ENCODE measurements at regions of chr1 and their contacts with region 1.

Region 1: DNA sequence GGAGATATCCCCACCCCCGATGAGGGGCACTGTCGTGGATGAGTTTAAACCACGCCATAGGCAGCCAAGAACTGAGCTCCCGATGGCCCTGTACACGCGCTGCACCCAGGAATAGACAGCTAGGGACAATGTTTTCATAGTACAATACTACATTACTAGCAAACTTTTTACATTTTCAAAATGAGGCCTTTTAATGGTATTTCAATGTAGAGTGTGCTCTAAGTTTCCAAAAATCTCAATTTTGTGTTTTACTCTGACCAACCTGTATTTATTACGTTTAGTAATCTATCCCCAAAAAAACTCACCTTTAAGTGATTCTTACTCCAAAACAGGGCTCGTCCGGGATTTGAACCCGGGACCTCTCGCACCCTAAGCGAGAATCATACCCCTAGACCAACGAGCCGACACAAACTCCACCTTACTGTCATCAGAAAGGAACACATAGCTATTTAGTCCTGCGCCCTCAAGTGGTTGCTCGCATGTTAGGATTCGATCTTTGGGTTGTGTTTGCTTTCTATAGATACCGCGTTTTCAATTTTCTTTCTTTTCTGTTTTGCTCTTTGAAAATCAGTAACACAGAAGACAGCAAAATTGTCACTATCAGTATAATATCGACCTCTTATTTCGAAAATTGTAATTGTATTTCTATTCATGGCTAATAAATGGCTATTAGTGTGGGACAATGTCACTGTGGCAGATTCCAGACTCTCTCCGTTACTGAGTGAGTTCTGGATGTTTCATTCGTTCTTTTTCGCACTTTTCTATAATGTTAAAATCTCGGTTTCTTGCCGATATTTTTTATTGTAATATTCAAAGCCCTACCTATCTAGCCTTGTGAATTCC is 6.4 kb upstream of the MPZL1 start:
- DNase-seq: peak; percentile 87 to 91 (median 88)
- H3K4me3 ChIP-seq: peak overlapping the region; percentile 80 to 87
- H3K4me3 Mint-ChIP-seq: peak overlapping the region; percentile 84 to 98 (median 92)
- H3K27ac ChIP-seq: peak overlapping the region; percentile 39
- H3K27ac Mint-ChIP-seq: peak overlapping the region; percentile 90 to 99 (median 94)
- H3K4me1 ChIP-seq: peaks cover 31% of the 10 kb centered on the region
- H3K4me1 Mint-ChIP-seq: peaks cover 19 to 49% (median 38%) of the 10 kb centered on the region in 4 donors
- H3K27me3 ChIP-seq: no peaks in the 10 kb centered on the region
- H3K27me3 Mint-ChIP-seq: peaks cover 4 to 12% of the 10 kb centered on the region in 2 donors

Region 2: DNA sequence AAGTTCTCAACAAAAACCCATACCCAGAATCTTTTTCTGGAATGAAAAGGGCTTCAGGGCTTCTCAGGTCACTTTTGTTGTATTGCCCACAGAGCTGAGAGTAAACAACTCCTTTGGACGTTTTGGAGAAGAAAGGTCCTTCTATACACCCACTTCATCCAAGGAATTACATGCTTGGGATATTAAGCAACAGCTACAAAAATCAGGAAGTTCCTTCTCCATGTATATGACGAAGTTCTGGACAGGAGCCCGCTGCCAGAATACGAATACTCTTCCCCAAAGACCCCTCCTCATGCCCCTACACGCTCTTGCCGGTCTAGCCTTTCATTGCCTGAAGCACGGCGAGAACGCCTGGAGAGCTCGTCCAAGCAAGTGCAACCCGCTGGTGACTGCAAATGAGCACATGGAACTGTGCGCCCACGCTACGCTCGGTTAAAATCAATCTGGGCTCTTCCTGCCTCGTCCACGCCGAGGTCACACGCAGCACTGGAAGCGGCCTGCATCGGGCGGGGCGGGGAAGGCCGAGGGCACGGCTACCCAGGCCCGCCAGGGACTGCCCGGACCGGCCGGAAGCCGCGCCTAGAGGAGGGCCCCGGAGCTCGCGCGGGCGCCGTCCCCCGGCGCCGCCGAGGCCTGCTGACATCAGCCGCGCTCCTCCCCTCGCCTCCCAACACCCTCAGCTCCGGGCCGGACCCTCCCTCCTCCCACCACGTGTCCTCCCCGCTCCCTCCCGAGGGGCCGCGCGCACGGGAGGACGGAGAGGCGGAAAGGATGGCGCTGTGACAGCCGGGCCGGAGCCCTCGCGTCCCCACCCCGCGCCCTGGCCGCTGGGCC is 876.4 kb before region 1 on chr1 and contains the start of gene POGK:
- CTCF ChIA-PET with region 1: no interaction called
- POLR2A ChIA-PET with region 1: no interaction called
- intact Hi-C with region 1: loop called (anchors 2 kb)
- DNase-seq: peak; percentile 79 to 85 (median 81)
- H3K4me3 ChIP-seq: peak within 1 kb of the TSS; percentile 72 to 77
- H3K4me3 Mint-ChIP-seq: peak within 1 kb of the TSS; percentile 90 to 98 (median 92)
- H3K27ac ChIP-seq: peak within 1 kb of the TSS; percentile 86
- H3K27ac Mint-ChIP-seq: peak within 1 kb of the TSS; percentile 92 to 99 (median 98)
- H3K4me1 ChIP-seq: peaks cover 45% of the 10 kb centered on the region
- H3K4me1 Mint-ChIP-seq: peaks cover 32 to 61% (median 42%) of the 10 kb centered on the region in 4 donors
- H3K27me3 ChIP-seq: no peaks in the 10 kb centered on the region
- H3K27me3 Mint-ChIP-seq: no peaks in the 10 kb centered on the region
- total RNA-seq, gene POGK: 37.9 to 44.3 TPM

Region 3: DNA sequence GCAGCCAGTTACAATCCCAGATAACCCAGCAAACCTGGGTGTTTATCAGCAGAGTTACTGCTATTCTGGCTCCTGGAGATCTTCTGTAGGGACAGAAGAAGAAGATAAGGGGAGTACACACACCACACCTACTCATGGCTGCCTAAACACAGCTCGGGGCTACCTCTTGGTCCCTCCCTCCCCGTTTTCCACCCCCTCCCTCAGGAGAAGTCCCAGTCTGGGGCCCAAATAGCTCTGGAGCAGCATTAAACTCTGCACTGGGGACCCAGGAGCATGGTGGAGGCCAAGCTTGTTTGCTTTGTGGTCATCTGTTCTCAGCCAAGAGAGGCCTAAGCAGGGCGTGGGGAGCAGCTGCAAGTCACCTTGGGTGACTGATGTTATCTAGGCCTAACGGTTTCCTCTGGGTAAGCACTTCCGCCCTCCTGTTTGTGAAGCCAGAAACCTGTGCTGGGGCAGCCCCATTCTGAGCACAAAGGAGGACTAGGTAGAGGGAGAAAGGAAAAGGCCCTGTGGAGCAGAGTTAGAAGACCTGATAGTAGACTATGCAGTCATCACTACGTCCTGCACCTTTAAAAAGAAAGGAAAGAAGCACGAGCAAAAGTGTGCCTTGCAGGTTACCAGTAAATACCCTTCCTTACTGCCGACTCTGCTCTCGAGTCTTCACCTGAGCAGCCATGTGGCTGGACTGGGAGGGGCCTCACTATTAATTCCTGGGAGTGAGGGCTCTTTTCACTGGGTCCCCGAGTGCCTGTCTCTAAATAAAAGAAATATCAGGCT is 87.3 kb before region 1 on chr1:
- CTCF ChIA-PET with region 1: interaction called, 9 read pairs
- POLR2A ChIA-PET with region 1: interaction called, 33 read pairs
- intact Hi-C with region 1: loop called (anchors 1 kb)
- DNase-seq: peak; percentile 78 to 95 (median 81)
- H3K4me3 ChIP-seq: peak overlapping the region; percentile 74 to 82
- H3K4me3 Mint-ChIP-seq: peak overlapping the region; percentile 90 to 99 (median 94)
- H3K27ac ChIP-seq: peak overlapping the region; percentile 90
- H3K27ac Mint-ChIP-seq: peak overlapping the region; percentile 94 to 99 (median 96)
- H3K4me1 ChIP-seq: peaks cover 56% of the 10 kb centered on the region
- H3K4me1 Mint-ChIP-seq: peaks cover 46 to 81% (median 54%) of the 10 kb centered on the region in 4 donors
- H3K27me3 ChIP-seq: no peaks in the 10 kb centered on the region
- H3K27me3 Mint-ChIP-seq: no peaks in the 10 kb centered on the region

Region 4: GRCh38 chr1:167697667-167698141 is 17.7 kb before region 1 on chr1:
- CTCF ChIA-PET with region 1: interaction called, 18 read pairs
- POLR2A ChIA-PET with region 1: interaction called, 6 read pairs
- intact Hi-C with region 1: no loop called
- DNase-seq: no peak
- H3K4me3 ChIP-seq: no peak overlapping the region
- H3K4me3 Mint-ChIP-seq: no peak overlapping the region
- H3K27ac ChIP-seq: no peak overlapping the region
- H3K27ac Mint-ChIP-seq: peak overlapping the region in 4 of 7 donors; percentile 3 to 54 (median 23)
- H3K4me1 ChIP-seq: no peaks in the 10 kb centered on the region
- H3K4me1 Mint-ChIP-seq: peaks cover 0 to 19% (median 7%) of the 10 kb centered on the region in 4 donors
- H3K27me3 ChIP-seq: no peaks in the 10 kb centered on the region
- H3K27me3 Mint-ChIP-seq: no peaks in the 10 kb centered on the region

Region 5: GRCh38 chr1:168082008-168082876 is 366.9 kb after region 1 on chr1:
- CTCF ChIA-PET with region 1: interaction called, 4 read pairs
- POLR2A ChIA-PET with region 1: no interaction called
- intact Hi-C with region 1: loop called (anchors 10 kb)
- DNase-seq: peak in 4 of 5 donors; percentile 40 to 55 (median 48)
- H3K4me3 ChIP-seq: no peak overlapping the region
- H3K4me3 Mint-ChIP-seq: no peak overlapping the region
- H3K27ac ChIP-seq: no peak overlapping the region
- H3K27ac Mint-ChIP-seq: peak overlapping the region in 2 of 7 donors; percentile 30
- H3K4me1 ChIP-seq: peaks cover 4% of the 10 kb centered on the region
- H3K4me1 Mint-ChIP-seq: peaks cover 0 to 6% (median 3%) of the 10 kb centered on the region in 4 donors
- H3K27me3 ChIP-seq: no peaks in the 10 kb centered on the region
- H3K27me3 Mint-ChIP-seq: no peaks in the 10 kb centered on the region

Region 6: GRCh38 chr1:168223681-168224540 is 508.5 kb after region 1 on chr1:
- CTCF ChIA-PET with region 1: no interaction called
- POLR2A ChIA-PET with region 1: no interaction called
- intact Hi-C with region 1: no loop called
- DNase-seq: no peak
- H3K4me3 ChIP-seq: no peak overlapping the region
- H3K4me3 Mint-ChIP-seq: peak overlapping the region in 3 of 8 donors; percentile 17 to 61 (median 32)
- H3K27ac ChIP-seq: no peak overlapping the region
- H3K27ac Mint-ChIP-seq: no peak overlapping the region
- H3K4me1 ChIP-seq: peaks cover 28% of the 10 kb centered on the region
- H3K4me1 Mint-ChIP-seq: peaks cover 18 to 35% (median 25%) of the 10 kb centered on the region in 4 donors
- H3K27me3 ChIP-seq: no peaks in the 10 kb centered on the region
- H3K27me3 Mint-ChIP-seq: peaks cover 2 to 4% of the 10 kb centered on the region in 2 donors

Measured in CD4-positive, alpha-beta memory T cell (primary cell).